Colonic mucosa (tissue), 4 donors: ENCODE measurements at regions of chr2 and their contacts with region 1.

Region 1: DNA sequence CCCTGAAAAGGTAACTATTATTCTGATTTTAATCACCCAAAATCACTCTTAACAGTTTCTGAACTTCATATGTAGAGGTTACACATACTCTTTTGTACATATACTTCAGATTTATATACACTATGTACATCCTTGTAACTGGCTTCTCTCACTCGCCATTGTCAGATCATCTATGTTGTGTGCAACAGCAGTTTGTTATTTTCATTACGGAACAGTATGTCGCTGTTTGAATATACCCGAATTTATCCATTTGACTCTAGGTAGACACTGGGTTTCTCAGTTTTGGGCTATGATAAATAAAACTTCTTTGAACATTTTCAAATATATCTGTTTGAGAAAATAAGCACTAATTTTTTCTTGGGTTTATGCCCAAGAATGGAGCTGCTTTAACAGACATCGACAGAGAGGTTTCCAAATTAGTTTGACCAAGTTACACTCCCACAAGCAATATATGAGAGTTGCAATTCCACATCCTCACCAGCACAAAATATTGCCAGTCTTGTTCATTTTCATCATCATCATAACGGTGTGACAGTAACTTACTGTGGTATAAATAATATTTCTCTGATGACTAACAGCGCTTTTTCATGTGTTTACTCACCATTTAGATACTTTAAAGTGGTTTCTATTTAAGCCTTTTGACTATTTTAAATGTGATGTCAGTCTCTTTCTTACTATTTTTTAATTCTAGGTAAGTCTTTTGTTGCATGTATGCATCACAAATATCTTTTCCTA is 80.9 kb downstream of the SMC6 start:
- DNase-seq: no peak
- H3K4me3 ChIP-seq: no peak overlapping the region
- H3K27ac ChIP-seq: no peak overlapping the region
- H3K4me1 ChIP-seq: no peaks in the 10 kb centered on the region
- H3K27me3 ChIP-seq: no peaks in the 10 kb centered on the region
- CTCF ChIP-seq: no peak

Region 2: GRCh38 chr2:16773080-16773713 is 899.6 kb before region 1 on chr2:
- intact Hi-C with region 1: loop called (anchors 10 kb)
- DNase-seq: no peak
- H3K4me3 ChIP-seq: no peak overlapping the region
- H3K27ac ChIP-seq: no peak overlapping the region
- H3K4me1 ChIP-seq: no peaks in the 10 kb centered on the region
- H3K27me3 ChIP-seq: no peaks in the 10 kb centered on the region
- CTCF ChIP-seq: peak; percentile 34

Region 3: GRCh38 chr2:17398770-17399169 is 274.0 kb before region 1 on chr2:
- intact Hi-C with region 1: no loop called
- DNase-seq: no peak
- H3K4me3 ChIP-seq: no peak overlapping the region
- H3K27ac ChIP-seq: no peak overlapping the region
- H3K4me1 ChIP-seq: no peaks in the 10 kb centered on the region
- H3K27me3 ChIP-seq: no peaks in the 10 kb centered on the region
- CTCF ChIP-seq: no peak

Region 4: GRCh38 chr2:17470855-17471641 is 201.7 kb before region 1 on chr2:
- intact Hi-C with region 1: loop called (anchors 2 kb)
- DNase-seq: no peak
- H3K4me3 ChIP-seq: no peak overlapping the region
- H3K27ac ChIP-seq: no peak overlapping the region
- H3K4me1 ChIP-seq: no peaks in the 10 kb centered on the region
- H3K27me3 ChIP-seq: no peaks in the 10 kb centered on the region
- CTCF ChIP-seq: peak; percentile 41

Region 5: GRCh38 chr2:17867133-17867532 is 194.4 kb after region 1 on chr2:
- intact Hi-C with region 1: no loop called
- DNase-seq: no peak
- H3K4me3 ChIP-seq: no peak overlapping the region
- H3K27ac ChIP-seq: no peak overlapping the region
- H3K4me1 ChIP-seq: no peaks in the 10 kb centered on the region
- H3K27me3 ChIP-seq: no peaks in the 10 kb centered on the region
- CTCF ChIP-seq: no peak